ENCODE measurements at regions of chr9 and their contacts with region 1.

Region 1: DNA sequence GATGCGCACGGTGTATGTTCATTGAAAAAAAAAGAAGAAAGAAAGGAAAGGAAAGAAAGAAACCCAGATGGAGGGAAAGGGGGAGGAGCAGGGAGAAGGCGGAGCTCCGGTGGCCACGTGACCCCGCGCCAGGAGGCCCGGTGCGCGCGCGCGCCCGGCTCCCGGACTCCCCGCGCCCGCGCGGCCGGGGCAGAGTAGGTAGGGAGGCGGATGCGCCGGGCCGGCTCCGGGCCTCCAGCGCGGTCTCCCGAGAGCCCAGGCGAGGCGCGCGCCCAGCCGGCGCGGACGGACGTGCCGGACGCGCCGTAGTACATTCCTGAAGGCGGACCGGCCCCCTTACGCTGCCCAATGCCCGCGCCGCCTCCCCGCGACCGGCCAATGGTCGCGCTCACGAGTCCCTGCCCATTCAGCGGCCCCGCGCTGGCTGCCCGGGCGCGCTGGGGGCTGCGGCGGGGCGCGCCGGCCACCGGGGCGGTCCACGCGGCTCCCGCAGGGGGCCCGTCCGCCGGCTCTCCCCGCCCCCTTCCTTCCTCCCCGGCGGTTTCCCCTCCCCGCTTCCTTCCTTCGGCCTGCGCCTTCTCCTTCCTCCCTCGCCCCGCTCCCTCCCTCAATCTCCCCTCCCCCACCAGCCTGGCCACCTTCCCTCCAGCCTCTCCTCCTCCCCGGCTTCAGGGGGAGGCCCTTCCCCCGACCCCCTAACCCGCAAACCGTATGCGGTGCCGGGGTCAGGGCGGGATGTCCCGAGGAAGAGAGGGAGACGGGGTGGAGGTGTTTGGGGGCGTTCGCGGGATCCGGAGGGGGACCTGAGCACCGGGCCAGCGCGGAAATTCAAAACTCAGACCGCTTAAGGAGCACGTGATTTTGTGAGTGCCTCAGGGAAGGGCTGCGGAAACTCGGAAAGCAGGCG is 5.8 kb downstream of the PTCH1 start:
- DNase-seq: peak; percentile 46
- ATAC-seq: peak; percentile 68
- H3K4me3 ChIP-seq: peak overlapping the region; percentile 94
- H3K27ac ChIP-seq: peak overlapping the region; percentile 39; the same call in 1 of the 2 replicates
- H3K4me1 ChIP-seq: peaks cover 11% of the 10 kb centered on the region
- H3K27me3 ChIP-seq: peaks cover 4 to 16% of the 10 kb centered on the region in 2 experiments; a peak in 3 of 4 replicates
- CTCF ChIP-seq: no peak
- EP300 ChIP-seq: no peak
- POLR2A ChIP-seq: peak; percentile 78
- RAD21 ChIP-seq: no peak

Region 2: GRCh38 chr9:95268681-95269080 is 242.3 kb before region 1 on chr9:
- CTCF ChIA-PET with region 1: no interaction called
- POLR2A ChIA-PET with region 1: no interaction called
- RAD21 ChIA-PET with region 1: no interaction called
- SMC1A ChIA-PET with region 1: no interaction called
- in situ Hi-C with region 1: no loop called
- intact Hi-C with region 1: loop called (anchors 5 kb)
- DNase-seq: no peak
- ATAC-seq: peak; percentile 68
- H3K4me3 ChIP-seq: no peak overlapping the region
- H3K27ac ChIP-seq: no peak overlapping the region
- H3K4me1 ChIP-seq: peaks cover 18% of the 10 kb centered on the region
- H3K27me3 ChIP-seq: no peaks in the 10 kb centered on the region
- CTCF ChIP-seq: peak; percentile 31 to 56 (median 36); a peak in 4 of 6 replicates
- EP300 ChIP-seq: no peak
- POLR2A ChIP-seq: no peak
- RAD21 ChIP-seq: peak; percentile 76

Region 3: DNA sequence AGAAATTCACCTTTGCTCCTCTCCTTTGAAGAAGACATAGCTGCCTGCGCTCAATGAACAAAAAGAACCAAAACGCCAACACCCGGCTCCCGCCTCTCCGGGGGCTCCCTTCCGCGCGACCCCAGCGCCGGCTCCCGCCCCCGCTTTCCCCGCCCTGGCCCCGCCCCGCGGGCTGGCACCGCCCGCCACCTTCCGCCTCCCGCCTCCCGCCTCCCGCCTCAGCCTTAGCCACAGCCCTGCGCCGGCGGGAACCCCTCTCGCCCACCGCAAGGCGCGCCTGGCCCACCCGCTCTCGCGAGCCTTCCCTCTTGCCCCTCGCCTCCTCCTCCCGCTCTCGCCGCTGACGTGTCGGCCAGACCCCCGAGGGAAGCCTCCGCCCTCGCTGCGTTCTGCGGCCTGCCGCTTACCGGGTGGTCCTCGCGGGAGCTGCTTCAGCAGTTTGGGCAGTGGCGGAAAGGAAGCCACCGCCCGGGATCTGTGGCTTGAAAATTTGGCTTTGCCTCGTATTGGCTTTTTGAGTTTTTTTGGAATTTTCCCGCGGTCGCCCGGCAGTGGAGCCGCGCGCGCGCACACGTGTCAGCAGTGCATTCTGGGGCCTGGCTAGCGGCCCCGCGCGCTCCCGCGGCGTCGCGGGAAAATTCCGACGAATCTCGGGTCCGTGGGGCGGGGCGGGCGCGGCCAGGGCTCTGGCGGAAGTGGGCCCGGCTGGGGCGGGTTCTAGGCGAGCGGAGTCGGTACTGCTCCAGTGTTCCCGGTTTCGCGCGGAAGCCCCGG is 193.7 kb before region 1 on chr9 and contains the start of gene FANCC:
- CTCF ChIA-PET with region 1: no interaction called
- POLR2A ChIA-PET with region 1: interaction called, 5 read pairs
- RAD21 ChIA-PET with region 1: interaction called, 4 read pairs
- SMC1A ChIA-PET with region 1: no interaction called
- in situ Hi-C with region 1: no loop called
- intact Hi-C with region 1: loop called (anchors 2 kb)
- DNase-seq: peak; percentile 39
- ATAC-seq: peak; percentile 89
- H3K4me3 ChIP-seq: peak within 1 kb of the TSS; percentile 91
- H3K27ac ChIP-seq: peak within 1 kb of the TSS; percentile 90
- H3K4me1 ChIP-seq: peaks cover 2% of the 10 kb centered on the region
- H3K27me3 ChIP-seq: no peaks in the 10 kb centered on the region
- CTCF ChIP-seq: no peak
- EP300 ChIP-seq: no peak
- POLR2A ChIP-seq: peak; percentile 91
- RAD21 ChIP-seq: no peak
- polyA plus RNA-seq, gene FANCC: 1.2 to 1.9 TPM

Region 4: GRCh38 chr9:95383185-95383673 is 127.7 kb before region 1 on chr9:
- CTCF ChIA-PET with region 1: no interaction called
- POLR2A ChIA-PET with region 1: no interaction called
- RAD21 ChIA-PET with region 1: no interaction called
- SMC1A ChIA-PET with region 1: interaction called, 3 read pairs
- in situ Hi-C with region 1: no loop called
- intact Hi-C with region 1: loop called (anchors 10 kb)
- DNase-seq: no peak
- ATAC-seq: no peak
- H3K4me3 ChIP-seq: no peak overlapping the region
- H3K27ac ChIP-seq: no peak overlapping the region
- H3K4me1 ChIP-seq: no peaks in the 10 kb centered on the region; the same call in 1 of the 2 replicates
- H3K27me3 ChIP-seq: no peaks in the 10 kb centered on the region; a peak in 1 of 4 replicates
- CTCF ChIP-seq: no peak
- EP300 ChIP-seq: no peak
- POLR2A ChIP-seq: no peak
- RAD21 ChIP-seq: no peak

Region 5: GRCh38 chr9:95462249-95463147 is 48.5 kb before region 1 on chr9:
- CTCF ChIA-PET with region 1: interaction called, 3 read pairs
- POLR2A ChIA-PET with region 1: interaction called, 9 read pairs
- RAD21 ChIA-PET with region 1: interaction called, 14 read pairs
- SMC1A ChIA-PET with region 1: interaction called, 12 read pairs
- in situ Hi-C with region 1: no loop called
- intact Hi-C with region 1: loop called (anchors 1 kb)
- DNase-seq: peak; percentile 94
- ATAC-seq: peak; percentile 98
- H3K4me3 ChIP-seq: peak overlapping the region; percentile 68
- H3K27ac ChIP-seq: peak overlapping the region; percentile 73
- H3K4me1 ChIP-seq: peaks cover 31% of the 10 kb centered on the region
- H3K27me3 ChIP-seq: no peaks in the 10 kb centered on the region
- CTCF ChIP-seq: no peak
- EP300 ChIP-seq: peak; percentile 89 to 97
- POLR2A ChIP-seq: peak; percentile 72
- RAD21 ChIP-seq: peak; percentile 17; the same call in 1 of the 2 replicates

Region 6: GRCh38 chr9:95565982-95566381 is 55.0 kb after region 1 on chr9:
- CTCF ChIA-PET with region 1: no interaction called
- POLR2A ChIA-PET with region 1: no interaction called
- RAD21 ChIA-PET with region 1: no interaction called
- SMC1A ChIA-PET with region 1: no interaction called
- in situ Hi-C with region 1: no loop called
- intact Hi-C with region 1: no loop called
- DNase-seq: no peak
- ATAC-seq: no peak
- H3K4me3 ChIP-seq: no peak overlapping the region
- H3K27ac ChIP-seq: no peak overlapping the region
- H3K4me1 ChIP-seq: no peaks in the 10 kb centered on the region
- H3K27me3 ChIP-seq: no peaks in the 10 kb centered on the region
- CTCF ChIP-seq: no peak
- EP300 ChIP-seq: no peak
- POLR2A ChIP-seq: no peak
- RAD21 ChIP-seq: no peak

Region 7: DNA sequence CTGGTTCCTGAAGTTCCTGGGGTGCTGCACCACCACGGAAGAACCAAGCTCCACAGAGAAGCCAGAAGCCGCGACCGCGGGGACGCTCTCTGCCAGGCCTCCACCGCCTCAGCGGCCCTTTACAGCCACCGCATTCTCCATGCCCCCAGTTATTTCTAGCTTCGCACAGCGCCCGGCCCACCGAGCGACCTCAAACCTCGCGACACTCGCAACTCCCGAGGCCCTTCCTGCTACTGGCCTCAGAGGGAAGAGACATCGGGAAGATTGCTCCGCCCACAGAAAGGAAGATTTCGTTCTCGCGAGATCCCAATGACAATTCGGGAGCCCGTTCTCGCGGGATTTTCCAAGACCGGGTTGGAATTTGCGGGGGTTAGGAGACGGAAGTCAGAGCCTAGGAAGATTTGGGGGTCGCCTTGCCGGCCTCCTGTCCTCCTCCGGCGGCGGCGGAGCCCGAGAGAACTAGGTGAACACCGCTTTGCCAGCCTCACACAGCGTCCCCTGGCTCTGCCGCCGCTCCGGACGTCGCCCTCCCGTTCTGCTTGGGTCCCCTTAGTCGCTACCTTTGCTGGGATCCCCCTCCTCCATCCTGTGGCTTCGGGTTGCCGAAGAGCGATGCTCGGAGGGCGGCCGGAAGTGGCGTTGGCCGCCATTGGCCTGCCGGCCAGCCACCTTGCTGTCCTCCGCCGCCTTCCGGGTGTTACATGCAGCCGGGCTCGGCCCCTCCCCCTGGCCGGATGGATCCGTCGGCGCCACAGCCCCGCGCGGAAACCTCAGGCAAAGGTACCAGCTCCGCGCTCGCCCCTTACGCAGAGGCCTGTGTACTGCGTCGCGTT is 364.6 kb after region 1 on chr9 and contains the start of gene ERCC6L2:
- CTCF ChIA-PET with region 1: no interaction called
- POLR2A ChIA-PET with region 1: interaction called, 3 read pairs
- RAD21 ChIA-PET with region 1: no interaction called
- SMC1A ChIA-PET with region 1: no interaction called
- in situ Hi-C with region 1: loop called (anchors 10 kb)
- intact Hi-C with region 1: loop called (anchors 5 kb)
- DNase-seq: peak; percentile 93
- ATAC-seq: peak; percentile 94
- H3K4me3 ChIP-seq: no peak within 1 kb of the TSS; the same call in 1 of the 2 replicates
- H3K27ac ChIP-seq: no peak within 1 kb of the TSS
- H3K4me1 ChIP-seq: peaks cover 3% of the 10 kb centered on the region
- H3K27me3 ChIP-seq: no peaks in the 10 kb centered on the region
- CTCF ChIP-seq: no peak
- EP300 ChIP-seq: no peak; a peak in 1 of 4 replicates
- POLR2A ChIP-seq: peak; percentile 96
- RAD21 ChIP-seq: no peak
- polyA plus RNA-seq, gene ERCC6L2: 8.1 to 8.4 TPM

Region 8: DNA sequence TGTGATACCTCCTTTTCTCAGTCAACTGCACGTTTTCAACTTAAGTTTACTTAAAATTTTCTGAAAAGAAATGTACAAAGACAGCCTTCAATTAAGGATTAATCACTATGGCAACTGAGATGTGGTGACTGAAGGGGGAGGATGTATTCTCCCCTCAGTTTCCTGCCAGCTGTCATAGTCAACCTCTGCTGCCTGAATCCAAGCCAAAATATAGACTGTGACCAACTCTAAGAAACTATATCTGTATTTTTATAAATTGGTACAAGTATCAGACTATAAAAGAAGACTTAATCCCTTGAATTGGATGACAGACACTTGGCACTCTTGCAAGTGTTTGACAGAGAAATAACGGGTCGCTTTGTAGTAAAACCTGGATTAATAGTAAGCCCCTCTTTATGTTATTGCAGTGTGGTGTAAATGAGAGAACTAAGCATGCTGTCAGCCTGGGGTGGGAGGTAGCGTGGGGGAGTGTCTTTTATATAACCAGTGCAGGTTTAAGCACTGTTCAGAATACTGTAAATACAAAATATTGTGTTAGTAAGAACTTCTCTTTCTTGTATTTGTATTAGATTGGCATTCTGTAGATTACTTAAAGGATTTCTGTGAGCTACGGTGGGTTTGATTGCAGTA is 470.9 kb after region 1 on chr9:
- CTCF ChIA-PET with region 1: no interaction called
- POLR2A ChIA-PET with region 1: no interaction called
- RAD21 ChIA-PET with region 1: no interaction called
- SMC1A ChIA-PET with region 1: no interaction called
- in situ Hi-C with region 1: no loop called
- intact Hi-C with region 1: no loop called
- DNase-seq: no peak
- ATAC-seq: no peak
- H3K4me3 ChIP-seq: no peak overlapping the region
- H3K27ac ChIP-seq: no peak overlapping the region
- H3K4me1 ChIP-seq: no peaks in the 10 kb centered on the region
- H3K27me3 ChIP-seq: no peaks in the 10 kb centered on the region
- CTCF ChIP-seq: no peak
- EP300 ChIP-seq: no peak
- POLR2A ChIP-seq: no peak
- RAD21 ChIP-seq: no peak